IMR-90 (cell line): ENCODE measurements at regions of chr15 and their contacts with region 1.

Region 1: DNA sequence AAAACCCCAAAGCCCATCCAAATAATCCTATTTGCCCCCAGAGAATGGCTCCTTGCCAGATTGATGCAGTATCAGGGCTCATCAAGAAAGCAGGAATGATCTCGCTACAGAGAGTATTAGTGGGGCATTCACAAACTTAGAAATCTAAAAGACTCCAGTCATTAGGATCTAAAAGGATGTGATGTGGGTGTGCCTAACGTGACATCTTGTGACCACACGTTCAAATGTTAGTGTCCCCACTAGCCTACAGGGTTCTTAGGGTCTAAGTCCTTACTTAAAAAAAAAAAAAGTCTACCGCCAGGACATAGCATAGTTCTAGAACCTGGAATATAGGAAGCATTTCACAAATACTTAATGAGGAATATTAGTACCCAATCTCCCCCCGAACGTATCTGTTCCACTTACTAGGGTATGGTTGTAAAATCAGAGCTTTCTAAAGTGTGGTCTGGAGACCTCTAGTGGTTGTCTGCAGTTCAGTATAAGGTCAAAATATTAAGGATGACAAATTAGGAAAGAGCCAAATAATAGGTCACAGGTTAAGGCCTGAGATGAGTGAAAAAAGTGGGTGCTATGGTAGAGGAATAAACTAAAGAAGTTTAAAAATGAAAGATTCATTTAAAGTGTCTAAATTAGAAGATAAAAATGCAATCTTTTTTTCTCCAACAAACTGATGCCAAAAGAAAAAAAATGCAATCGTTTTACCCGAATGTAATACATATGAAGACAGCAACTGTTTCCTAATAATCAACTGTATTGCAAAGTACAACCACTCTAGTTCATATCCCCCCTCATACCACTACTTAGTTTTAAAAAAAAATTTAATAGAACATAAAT is 4.2 kb upstream of the CHRM5 start:
- DNase-seq: peak; percentile 37
- ATAC-seq: peak; percentile 81
- H3K4me3 ChIP-seq: no peak overlapping the region
- H3K27ac ChIP-seq: no peak overlapping the region
- H3K4me1 ChIP-seq: no peaks in the 10 kb centered on the region
- H3K27me3 ChIP-seq: no peaks in the 10 kb centered on the region
- CTCF ChIP-seq: peak; percentile 64
- POLR2A ChIP-seq: no peak
- RAD21 ChIP-seq: peak; percentile 64

Region 2: DNA sequence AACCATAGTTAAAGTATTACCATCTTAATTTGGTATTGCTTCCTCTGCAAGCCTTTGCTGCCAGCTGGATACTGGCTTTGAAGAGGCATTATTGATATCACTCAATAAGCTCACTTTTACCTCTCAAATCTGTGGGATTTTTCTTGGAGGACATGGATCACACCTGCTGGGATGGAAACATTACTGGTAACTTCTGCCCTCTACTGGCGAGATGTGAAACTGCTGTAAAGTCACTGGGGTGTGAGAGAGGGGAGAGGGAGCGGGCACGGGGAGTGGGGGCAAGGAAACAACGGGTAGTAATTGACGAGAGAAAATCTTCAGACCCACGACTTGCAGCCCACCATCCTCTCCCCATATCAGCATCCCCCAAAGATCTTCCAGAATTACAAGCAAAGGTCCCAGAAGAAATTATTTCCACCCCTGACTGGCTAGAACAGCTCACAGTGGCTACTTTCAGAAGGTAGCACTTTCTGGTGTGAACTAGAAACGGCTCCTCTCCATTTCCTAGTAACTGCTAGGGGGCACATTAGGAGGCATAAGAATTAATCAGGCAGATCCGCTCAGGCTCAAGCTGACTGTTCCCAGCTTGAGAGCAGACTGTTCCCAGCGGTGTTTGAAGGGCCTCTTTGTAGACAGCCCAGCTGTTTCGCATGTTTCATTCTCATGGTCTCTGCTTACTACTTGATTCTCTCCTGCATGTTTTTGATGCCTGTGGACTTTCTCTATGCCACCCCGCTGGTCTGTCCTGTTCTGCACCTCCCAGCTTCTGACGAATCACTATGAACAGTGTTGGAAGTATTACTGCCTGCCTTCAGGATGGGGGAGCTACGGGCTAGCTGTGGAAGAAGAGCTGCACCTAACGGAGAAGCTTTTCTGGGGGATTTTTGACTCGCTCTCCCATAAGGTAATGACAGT is 226.1 kb before region 1 on chr15:
- CTCF ChIA-PET with region 1: interaction called, 6 read pairs
- POLR2A ChIA-PET with region 1: no interaction called
- dilution Hi-C with region 1: no loop called
- in situ Hi-C with region 1: loop called (anchors 5 kb)
- intact Hi-C with region 1: loop called (anchors 5 kb)
- DNase-seq: peak; percentile 23
- ATAC-seq: peak; percentile 81
- H3K4me3 ChIP-seq: no peak overlapping the region
- H3K27ac ChIP-seq: no peak overlapping the region
- H3K4me1 ChIP-seq: no peaks in the 10 kb centered on the region
- H3K27me3 ChIP-seq: peaks cover 18% of the 10 kb centered on the region
- CTCF ChIP-seq: peak; percentile 62
- POLR2A ChIP-seq: no peak
- RAD21 ChIP-seq: peak; percentile 51

Region 3: GRCh38 chr15:33801954-33802353 is 162.1 kb before region 1 on chr15:
- CTCF ChIA-PET with region 1: no interaction called
- POLR2A ChIA-PET with region 1: no interaction called
- dilution Hi-C with region 1: no loop called
- in situ Hi-C with region 1: no loop called
- intact Hi-C with region 1: loop called (anchors 5 kb)
- DNase-seq: no peak
- ATAC-seq: no peak
- H3K4me3 ChIP-seq: no peak overlapping the region
- H3K27ac ChIP-seq: no peak overlapping the region
- H3K4me1 ChIP-seq: no peaks in the 10 kb centered on the region
- H3K27me3 ChIP-seq: peaks cover 8% of the 10 kb centered on the region
- CTCF ChIP-seq: no peak
- POLR2A ChIP-seq: no peak
- RAD21 ChIP-seq: no peak

Region 4: DNA sequence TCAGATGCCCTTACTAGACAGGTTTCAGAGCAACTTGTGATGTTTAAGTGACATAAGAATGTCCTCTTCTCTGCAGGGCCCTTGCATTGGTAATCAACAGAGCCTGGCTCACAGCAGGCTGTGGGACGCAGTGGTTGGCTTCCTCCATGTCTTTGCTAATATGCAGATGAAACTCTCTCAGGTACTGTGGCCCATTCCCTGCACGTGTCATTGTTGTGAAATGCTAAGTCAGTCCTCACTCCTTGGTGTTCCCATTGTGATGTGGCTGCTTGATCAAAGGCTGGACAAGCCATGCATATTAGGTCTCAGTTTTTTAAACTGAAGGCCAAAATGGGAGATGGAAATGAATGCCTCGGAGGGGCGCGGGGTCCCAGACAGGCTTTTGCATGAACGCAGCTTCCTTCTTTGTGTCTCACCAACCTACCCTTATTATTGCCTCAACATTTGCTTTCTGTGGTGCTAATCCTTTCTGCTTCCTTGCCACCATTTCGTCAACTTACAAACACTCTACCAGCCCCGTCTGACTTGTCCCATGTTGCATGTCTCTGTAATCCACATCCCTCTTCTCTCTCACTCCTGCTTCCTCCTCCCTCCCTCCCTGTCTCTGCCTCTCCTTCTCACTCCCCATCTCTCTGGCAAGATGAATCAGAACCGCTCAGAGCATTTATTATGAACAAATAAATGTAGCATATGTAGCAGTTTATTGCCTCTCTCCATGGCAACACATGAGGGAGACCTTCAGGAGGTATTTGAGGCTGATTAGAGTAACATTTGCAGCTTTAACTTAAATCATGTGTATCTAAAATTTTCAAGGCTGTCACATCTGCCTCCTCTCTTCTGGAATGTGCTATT is 128.9 kb before region 1 on chr15:
- CTCF ChIA-PET with region 1: no interaction called
- POLR2A ChIA-PET with region 1: no interaction called
- dilution Hi-C with region 1: no loop called
- in situ Hi-C with region 1: no loop called
- intact Hi-C with region 1: no loop called
- DNase-seq: no peak
- ATAC-seq: no peak
- H3K4me3 ChIP-seq: no peak overlapping the region
- H3K27ac ChIP-seq: no peak overlapping the region
- H3K4me1 ChIP-seq: no peaks in the 10 kb centered on the region
- H3K27me3 ChIP-seq: peaks cover 2% of the 10 kb centered on the region; the same call in 1 of the 2 replicates
- CTCF ChIP-seq: no peak
- POLR2A ChIP-seq: no peak
- RAD21 ChIP-seq: no peak

Region 5: DNA sequence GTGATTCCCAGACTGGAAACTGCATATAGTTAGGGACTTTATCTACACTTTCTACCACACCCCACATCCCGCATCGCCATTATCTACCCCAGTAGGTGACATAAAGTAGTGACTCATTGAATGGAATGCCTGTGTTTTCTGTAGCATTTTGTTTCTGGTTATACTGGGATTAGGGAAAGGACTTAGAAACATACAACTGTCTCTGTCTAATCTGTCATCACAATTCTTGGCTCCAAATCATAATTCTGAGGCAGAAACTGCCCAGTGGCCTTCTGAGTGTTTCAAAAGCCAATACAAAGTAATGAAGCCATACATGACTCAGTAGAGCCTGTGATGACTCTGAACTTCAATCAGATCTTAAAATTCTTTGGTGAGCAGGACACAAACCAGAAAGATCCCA is 111.5 kb before region 1 on chr15:
- CTCF ChIA-PET with region 1: no interaction called
- POLR2A ChIA-PET with region 1: no interaction called
- dilution Hi-C with region 1: no loop called
- in situ Hi-C with region 1: no loop called
- intact Hi-C with region 1: loop called (anchors 5 kb)
- DNase-seq: peak; percentile 78
- ATAC-seq: peak; percentile 82
- H3K4me3 ChIP-seq: no peak overlapping the region
- H3K27ac ChIP-seq: no peak overlapping the region
- H3K4me1 ChIP-seq: no peaks in the 10 kb centered on the region
- H3K27me3 ChIP-seq: no peaks in the 10 kb centered on the region
- CTCF ChIP-seq: no peak
- POLR2A ChIP-seq: no peak
- RAD21 ChIP-seq: no peak